CD4-positive, alpha-beta T cell (primary cell): ENCODE measurements at regions of chrX and their contacts with region 1.

Region 1: GRCh38 chrX:131841496-131842410 is 181.3 kb upstream of the STK26 start:
- DNase-seq: peak in 7 of 14 experiments; percentile 2 to 72 (median 43)
- ATAC-seq: peak; percentile 64
- H3K4me3 ChIP-seq: no peak overlapping the region
- H3K4me3 Mint-ChIP-seq: no peak overlapping the region
- H3K27ac ChIP-seq: no peak overlapping the region
- H3K27ac Mint-ChIP-seq: no peak overlapping the region
- H3K4me1 ChIP-seq: peaks cover 6% of the 10 kb centered on the region
- H3K4me1 Mint-ChIP-seq: no peaks in the 10 kb centered on the region
- H3K27me3 ChIP-seq: no peaks in the 10 kb centered on the region
- H3K27me3 Mint-ChIP-seq: no peaks in the 10 kb centered on the region
- CTCF ChIP-seq: peak; percentile 63

Region 2: GRCh38 chrX:131802835-131803626 is 38.7 kb before region 1 on chrX:
- CTCF ChIA-PET with region 1: no interaction called
- POLR2A ChIA-PET with region 1: no interaction called
- intact Hi-C with region 1: no loop called
- DNase-seq: peak in 8 of 14 experiments; percentile 10 to 84 (median 60)
- ATAC-seq: no peak
- H3K4me3 ChIP-seq: no peak overlapping the region
- H3K4me3 Mint-ChIP-seq: no peak overlapping the region
- H3K27ac ChIP-seq: no peak overlapping the region
- H3K27ac Mint-ChIP-seq: no peak overlapping the region
- H3K4me1 ChIP-seq: peaks cover 2% of the 10 kb centered on the region
- H3K4me1 Mint-ChIP-seq: no peaks in the 10 kb centered on the region
- H3K27me3 ChIP-seq: no peaks in the 10 kb centered on the region
- H3K27me3 Mint-ChIP-seq: no peaks in the 10 kb centered on the region
- CTCF ChIP-seq: no peak

Region 3: GRCh38 chrX:131830400-131831184 is 11.2 kb before region 1 on chrX:
- CTCF ChIA-PET with region 1: interaction called, 10 read pairs
- POLR2A ChIA-PET with region 1: no interaction called
- intact Hi-C with region 1: no loop called
- DNase-seq: peak in 10 of 14 experiments; percentile 8 to 80 (median 36)
- ATAC-seq: peak; percentile 62
- H3K4me3 ChIP-seq: peak overlapping the region; percentile 37
- H3K4me3 Mint-ChIP-seq: peak overlapping the region; percentile 82
- H3K27ac ChIP-seq: peak overlapping the region in 1 of 2 donors; percentile 58
- H3K27ac Mint-ChIP-seq: peak overlapping the region; percentile 86
- H3K4me1 ChIP-seq: peaks cover 19% of the 10 kb centered on the region
- H3K4me1 Mint-ChIP-seq: peaks cover 33% of the 10 kb centered on the region
- H3K27me3 ChIP-seq: no peaks in the 10 kb centered on the region
- H3K27me3 Mint-ChIP-seq: no peaks in the 10 kb centered on the region
- CTCF ChIP-seq: no peak